ENCODE measurements at regions of chr4 and their contacts with region 1.

Region 1: GRCh38 chr4:164536814-164537213 is 217.1 kb upstream of the SMIM31 start:
- DNase-seq: peak; percentile 96
- H3K4me3 ChIP-seq: peak overlapping the region in 1 of 3 experiments; percentile 1
- H3K27ac ChIP-seq: peak overlapping the region; percentile 79
- H3K4me1 ChIP-seq: peaks cover 24% of the 10 kb centered on the region
- H3K27me3 ChIP-seq: no peaks in the 10 kb centered on the region
- CTCF ChIP-seq: peak in 1 of 2 donors; percentile 14

Region 2: DNA sequence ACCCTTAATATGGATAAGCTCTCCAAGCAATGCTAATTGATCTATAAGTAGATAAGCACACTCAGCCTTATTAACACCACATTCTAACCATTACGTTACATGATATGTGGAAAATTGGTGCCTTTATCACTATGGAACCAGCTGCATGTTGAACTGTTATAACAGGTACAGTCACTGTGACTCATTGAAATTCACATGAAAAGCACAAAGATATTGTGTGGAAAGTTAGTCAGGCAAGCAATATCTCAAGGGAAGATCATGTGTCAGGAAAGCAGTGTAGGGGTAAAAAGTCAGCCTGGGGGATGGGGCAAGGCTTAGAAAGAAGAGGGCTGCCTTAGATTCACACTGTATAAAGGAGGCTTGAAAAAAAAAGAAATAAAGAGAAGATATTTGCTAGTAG is 96.6 kb before region 1 on chr4:
- CTCF ChIA-PET with region 1: no interaction called
- dilution Hi-C with region 1: no loop called
- in situ Hi-C with region 1: no loop called
- intact Hi-C with region 1: loop called (anchors 5 kb)
- DNase-seq: peak; percentile 88
- H3K4me3 ChIP-seq: no peak overlapping the region
- H3K27ac ChIP-seq: peak overlapping the region; percentile 65
- H3K4me1 ChIP-seq: peaks cover 33% of the 10 kb centered on the region
- H3K27me3 ChIP-seq: no peaks in the 10 kb centered on the region
- CTCF ChIP-seq: no peak

Region 3: DNA sequence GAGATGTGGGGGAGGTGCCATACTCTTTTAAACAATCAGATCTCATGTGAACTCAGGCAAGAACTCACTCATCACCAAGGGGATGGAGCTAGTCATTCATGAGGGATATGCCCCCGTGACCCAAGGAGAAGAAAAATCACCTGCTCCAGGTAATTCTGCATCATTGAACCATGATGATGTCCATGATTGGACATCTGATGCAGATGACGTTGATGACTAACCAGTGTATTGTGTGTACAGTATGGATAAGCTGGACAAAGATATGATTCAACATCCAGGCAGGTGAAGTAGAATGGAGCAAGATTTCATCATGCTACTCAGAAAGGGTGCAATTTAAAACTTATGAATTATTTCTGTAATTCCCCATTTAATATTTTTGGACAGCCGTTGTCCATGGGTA is 69.3 kb before region 1 on chr4:
- CTCF ChIA-PET with region 1: no interaction called
- dilution Hi-C with region 1: no loop called
- in situ Hi-C with region 1: no loop called
- intact Hi-C with region 1: loop called (anchors 10 kb)
- DNase-seq: peak; percentile 56
- H3K4me3 ChIP-seq: no peak overlapping the region
- H3K27ac ChIP-seq: no peak overlapping the region
- H3K4me1 ChIP-seq: no peaks in the 10 kb centered on the region
- H3K27me3 ChIP-seq: no peaks in the 10 kb centered on the region
- CTCF ChIP-seq: no peak

Region 4: DNA sequence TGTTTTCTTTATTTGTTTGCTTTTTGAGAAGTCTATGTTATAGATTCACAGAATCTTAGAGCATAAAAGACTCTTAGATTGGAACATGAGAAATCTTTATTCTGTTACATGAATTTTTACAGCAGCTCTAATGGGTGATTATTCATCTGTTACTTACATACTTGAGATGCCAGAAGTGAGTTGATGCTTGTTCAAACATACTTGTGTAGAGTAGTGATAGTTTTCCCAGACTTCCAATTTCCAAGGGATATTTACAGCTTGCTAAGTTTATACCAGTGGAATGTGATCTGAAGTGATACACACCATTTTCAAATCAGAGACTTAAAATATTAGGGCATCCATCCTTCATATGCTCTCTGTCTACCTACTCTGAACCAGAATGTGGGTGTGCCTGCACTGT is 35.7 kb before region 1 on chr4:
- CTCF ChIA-PET with region 1: no interaction called
- dilution Hi-C with region 1: no loop called
- in situ Hi-C with region 1: no loop called
- intact Hi-C with region 1: loop called (anchors 5 kb)
- DNase-seq: peak; percentile 41
- H3K4me3 ChIP-seq: no peak overlapping the region
- H3K27ac ChIP-seq: peak overlapping the region; percentile 42
- H3K4me1 ChIP-seq: peaks cover 7% of the 10 kb centered on the region
- H3K27me3 ChIP-seq: no peaks in the 10 kb centered on the region
- CTCF ChIP-seq: no peak

Region 5: GRCh38 chr4:164572877-164573279 is 36.1 kb after region 1 on chr4:
- CTCF ChIA-PET with region 1: no interaction called
- dilution Hi-C with region 1: no loop called
- in situ Hi-C with region 1: no loop called
- intact Hi-C with region 1: loop called (anchors 5 kb)
- DNase-seq: peak; percentile 78
- H3K4me3 ChIP-seq: no peak overlapping the region
- H3K27ac ChIP-seq: peak overlapping the region; percentile 46
- H3K4me1 ChIP-seq: peaks cover 27% of the 10 kb centered on the region
- H3K27me3 ChIP-seq: no peaks in the 10 kb centered on the region
- CTCF ChIP-seq: no peak

Region 6: GRCh38 chr4:164621886-164622521 is 85.2 kb after region 1 on chr4:
- CTCF ChIA-PET with region 1: no interaction called
- dilution Hi-C with region 1: no loop called
- in situ Hi-C with region 1: no loop called
- intact Hi-C with region 1: loop called (anchors 5 kb)
- DNase-seq: peak; percentile 65
- H3K4me3 ChIP-seq: no peak overlapping the region
- H3K27ac ChIP-seq: no peak overlapping the region
- H3K4me1 ChIP-seq: peaks cover 11% of the 10 kb centered on the region
- H3K27me3 ChIP-seq: no peaks in the 10 kb centered on the region
- CTCF ChIP-seq: no peak